Activated B cell treated with CpG ODN at 0.5 μM for 24 hours (primary cell): ENCODE measurements at regions of chr14 and their contacts with region 1.

Region 1: GRCh38 chr14:89178802-89179535 is 238.1 kb downstream of the FOXN3 start:
- DNase-seq: no peak
- ATAC-seq: no peak
- H3K4me3 Mint-ChIP-seq: no peak overlapping the region
- H3K27ac Mint-ChIP-seq: peak overlapping the region; percentile 31
- H3K4me1 Mint-ChIP-seq: peaks cover 19% of the 10 kb centered on the region
- H3K27me3 Mint-ChIP-seq: no peaks in the 10 kb centered on the region
- CTCF ChIP-seq: no peak

Region 2: GRCh38 chr14:88895116-88895515 is 283.9 kb before region 1 on chr14:
- CTCF ChIA-PET with region 1: no interaction called
- POLR2A ChIA-PET with region 1: no interaction called
- intact Hi-C with region 1: no loop called
- DNase-seq: no peak
- ATAC-seq: no peak
- H3K4me3 Mint-ChIP-seq: no peak overlapping the region
- H3K27ac Mint-ChIP-seq: no peak overlapping the region
- H3K4me1 Mint-ChIP-seq: no peaks in the 10 kb centered on the region
- H3K27me3 Mint-ChIP-seq: peaks cover 6% of the 10 kb centered on the region
- CTCF ChIP-seq: no peak

Region 3: DNA sequence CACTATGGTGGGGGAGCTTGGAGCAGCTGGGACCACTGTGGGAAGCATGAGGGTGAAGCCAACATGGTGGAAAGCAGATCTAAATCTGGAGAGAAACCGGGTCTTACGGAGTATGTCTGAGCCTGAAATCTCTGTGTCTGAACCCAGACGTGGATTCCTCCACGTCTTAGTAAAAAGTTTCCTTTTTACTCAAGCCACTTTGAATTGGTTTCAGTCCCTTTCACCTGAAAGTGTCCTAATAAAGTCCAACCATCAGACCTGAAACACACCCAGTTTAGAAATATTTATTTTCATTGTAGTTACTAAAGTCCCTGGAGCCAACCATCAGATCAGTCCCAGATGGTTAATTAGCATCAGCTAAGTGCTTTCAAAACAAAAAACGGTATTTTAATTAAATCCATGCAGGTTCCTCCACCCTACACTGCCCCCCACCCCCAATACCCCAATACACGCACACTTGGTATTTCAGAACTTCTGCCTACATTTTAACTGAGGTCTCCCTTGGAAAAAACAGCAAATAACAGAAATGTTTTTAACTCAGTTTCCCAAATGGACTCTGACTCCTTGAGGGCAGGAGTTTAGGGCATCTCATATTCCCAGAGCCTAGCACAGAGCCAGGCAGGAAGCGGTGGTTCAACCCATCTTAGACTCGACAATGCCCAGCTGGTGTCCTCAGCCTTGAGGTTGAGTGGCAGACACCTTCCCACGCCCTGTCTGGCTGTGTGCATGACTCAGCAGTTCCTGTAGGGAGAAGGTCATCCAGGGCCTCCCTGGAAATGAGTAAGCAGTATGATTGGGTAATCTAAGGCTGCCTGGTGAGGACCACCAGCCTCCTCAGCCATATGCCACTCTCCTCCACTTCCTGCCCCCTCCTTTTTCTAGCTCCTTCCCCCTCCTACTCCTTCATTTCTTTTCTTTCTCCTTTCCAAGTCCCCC is 178.7 kb before region 1 on chr14:
- CTCF ChIA-PET with region 1: no interaction called
- POLR2A ChIA-PET with region 1: no interaction called
- intact Hi-C with region 1: no loop called
- DNase-seq: no peak
- ATAC-seq: no peak
- H3K4me3 Mint-ChIP-seq: no peak overlapping the region
- H3K27ac Mint-ChIP-seq: no peak overlapping the region
- H3K4me1 Mint-ChIP-seq: no peaks in the 10 kb centered on the region
- H3K27me3 Mint-ChIP-seq: peaks cover 12% of the 10 kb centered on the region
- CTCF ChIP-seq: no peak

Region 4: DNA sequence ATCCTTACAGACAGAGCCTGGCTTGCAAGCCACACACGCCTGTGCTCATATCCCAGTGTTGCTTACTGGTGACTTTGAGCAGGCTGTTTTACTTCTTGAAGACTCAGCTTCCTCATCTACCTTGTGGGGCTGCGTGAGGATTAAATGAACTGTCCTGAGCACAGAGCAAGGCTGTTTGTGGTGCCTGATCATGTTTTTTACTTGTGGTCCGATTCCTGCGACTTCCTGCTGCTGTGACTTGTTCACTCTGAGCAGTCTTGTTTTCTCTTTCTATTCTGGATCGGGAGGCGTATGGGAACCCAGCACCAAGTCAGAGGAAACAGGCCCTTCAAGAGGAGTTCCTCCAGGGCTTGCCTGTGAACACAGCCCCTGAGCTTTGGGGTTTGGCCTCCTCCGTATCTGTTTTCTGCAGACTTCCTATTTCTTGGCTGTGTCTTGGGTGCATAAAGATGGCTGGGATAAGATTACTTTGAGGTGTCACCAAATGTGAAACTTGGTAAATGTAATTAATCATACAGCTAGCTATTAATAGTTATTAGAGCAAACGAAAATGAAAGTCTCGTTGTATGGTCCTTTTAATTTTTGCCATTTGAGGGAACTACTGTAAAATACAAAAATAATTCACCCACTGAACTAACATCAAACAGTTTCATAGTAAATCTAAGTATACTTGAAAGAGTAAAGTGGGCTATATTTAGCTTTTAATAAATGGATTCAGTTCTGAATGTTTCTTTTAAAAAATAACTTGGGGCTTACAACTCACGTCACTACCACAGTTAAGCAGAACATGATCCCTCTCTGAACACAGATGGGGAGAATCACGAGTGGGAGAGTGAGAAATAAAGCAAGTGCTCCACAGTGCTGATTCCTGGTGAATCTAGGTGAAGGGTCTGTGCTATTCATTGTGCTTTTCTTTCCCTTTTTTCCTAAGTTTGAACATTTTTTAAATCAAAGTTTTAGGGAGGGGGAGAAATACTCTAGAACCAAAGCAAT is 13.5 kb before region 1 on chr14:
- CTCF ChIA-PET with region 1: interaction called, 15 read pairs
- POLR2A ChIA-PET with region 1: interaction called, 5 read pairs
- intact Hi-C with region 1: no loop called
- DNase-seq: no peak
- ATAC-seq: peak; percentile 66
- H3K4me3 Mint-ChIP-seq: peak overlapping the region; percentile 83
- H3K27ac Mint-ChIP-seq: peak overlapping the region; percentile 90
- H3K4me1 Mint-ChIP-seq: peaks cover 36% of the 10 kb centered on the region
- H3K27me3 Mint-ChIP-seq: no peaks in the 10 kb centered on the region
- CTCF ChIP-seq: no peak

Region 5: DNA sequence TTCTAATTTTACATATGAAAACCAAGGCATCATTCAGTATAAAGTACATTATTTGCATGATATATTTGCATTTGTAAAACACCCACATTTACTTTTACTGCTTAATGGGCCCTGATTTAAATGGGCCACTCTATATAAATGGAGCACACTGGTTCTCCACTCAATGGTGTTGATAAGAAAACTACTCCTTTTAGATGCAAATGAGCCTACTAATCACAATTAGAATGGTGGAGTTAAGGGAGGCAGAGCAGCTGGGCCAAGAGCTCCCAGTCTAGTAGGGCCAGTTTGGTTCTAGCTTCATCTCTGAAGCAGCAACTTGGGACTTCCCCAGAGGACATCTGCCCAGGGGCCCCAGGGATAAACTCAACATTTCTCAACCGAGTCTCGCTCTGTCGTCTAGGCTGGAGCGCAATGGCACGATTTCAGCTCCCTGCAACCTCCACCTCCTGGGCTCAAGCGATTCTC is 117.3 kb after region 1 on chr14:
- CTCF ChIA-PET with region 1: no interaction called
- POLR2A ChIA-PET with region 1: no interaction called
- intact Hi-C with region 1: no loop called
- DNase-seq: no peak
- ATAC-seq: peak; percentile 58
- H3K4me3 Mint-ChIP-seq: no peak overlapping the region
- H3K27ac Mint-ChIP-seq: no peak overlapping the region
- H3K4me1 Mint-ChIP-seq: peaks cover 49% of the 10 kb centered on the region
- H3K27me3 Mint-ChIP-seq: no peaks in the 10 kb centered on the region
- CTCF ChIP-seq: no peak

Region 6: GRCh38 chr14:89336338-89336737 is 157.4 kb after region 1 on chr14:
- CTCF ChIA-PET with region 1: interaction called, 19 read pairs
- POLR2A ChIA-PET with region 1: no interaction called
- intact Hi-C with region 1: loop called (anchors 1 kb)
- DNase-seq: no peak
- ATAC-seq: peak; percentile 69
- H3K4me3 Mint-ChIP-seq: no peak overlapping the region
- H3K27ac Mint-ChIP-seq: peak overlapping the region; percentile 66
- H3K4me1 Mint-ChIP-seq: peaks cover 71% of the 10 kb centered on the region
- H3K27me3 Mint-ChIP-seq: no peaks in the 10 kb centered on the region
- CTCF ChIP-seq: no peak

Region 7: GRCh38 chr14:89509891-89510290 is 330.9 kb after region 1 on chr14:
- CTCF ChIA-PET with region 1: no interaction called
- POLR2A ChIA-PET with region 1: no interaction called
- intact Hi-C with region 1: loop called (anchors 5 kb)
- DNase-seq: no peak
- ATAC-seq: no peak
- H3K4me3 Mint-ChIP-seq: peak overlapping the region; percentile 81
- H3K27ac Mint-ChIP-seq: peak overlapping the region; percentile 93
- H3K4me1 Mint-ChIP-seq: peaks cover 42% of the 10 kb centered on the region
- H3K27me3 Mint-ChIP-seq: no peaks in the 10 kb centered on the region
- CTCF ChIP-seq: no peak

Region 8: DNA sequence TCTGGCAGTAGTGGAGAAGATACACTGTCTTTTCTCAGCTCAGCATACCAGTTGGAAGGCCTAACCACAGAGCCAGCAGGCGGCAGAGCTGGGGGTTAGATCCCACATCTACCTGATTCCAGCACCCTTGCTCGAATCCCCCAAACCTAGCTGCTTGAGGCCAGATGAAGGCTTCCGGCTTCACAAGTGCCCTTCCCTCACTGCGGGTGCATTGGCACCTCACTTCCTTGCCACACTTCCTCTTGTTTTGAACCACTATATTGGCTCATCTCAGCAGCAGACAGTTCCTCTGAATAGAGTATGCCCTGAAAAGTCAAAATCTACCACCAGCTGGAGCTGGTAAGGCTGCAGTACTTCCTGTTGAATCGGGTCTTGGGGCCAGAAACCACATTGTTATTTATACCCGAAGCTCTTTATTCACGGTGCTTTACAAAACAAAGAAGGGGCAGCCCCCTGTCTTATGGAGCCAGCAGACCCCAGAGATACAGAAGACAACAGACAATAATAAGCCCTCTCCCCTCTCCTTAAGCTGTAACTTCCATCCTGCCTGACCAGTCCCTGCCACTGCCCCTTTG is 541.9 kb after region 1 on chr14:
- CTCF ChIA-PET with region 1: no interaction called
- POLR2A ChIA-PET with region 1: no interaction called
- intact Hi-C with region 1: loop called (anchors 2 kb)
- DNase-seq: peak; percentile 45
- ATAC-seq: peak; percentile 90
- H3K4me3 Mint-ChIP-seq: peak overlapping the region; percentile 69
- H3K27ac Mint-ChIP-seq: peak overlapping the region; percentile 95
- H3K4me1 Mint-ChIP-seq: peaks cover 66% of the 10 kb centered on the region
- H3K27me3 Mint-ChIP-seq: no peaks in the 10 kb centered on the region
- CTCF ChIP-seq: no peak

Region 9: GRCh38 chr14:89899917-89900663 is 721.1 kb after region 1 on chr14:
- CTCF ChIA-PET with region 1: interaction called, 3 read pairs
- POLR2A ChIA-PET with region 1: no interaction called
- intact Hi-C with region 1: loop called (anchors 1 kb)
- DNase-seq: no peak
- ATAC-seq: peak; percentile 31
- H3K4me3 Mint-ChIP-seq: no peak overlapping the region
- H3K27ac Mint-ChIP-seq: no peak overlapping the region
- H3K4me1 Mint-ChIP-seq: peaks cover 3% of the 10 kb centered on the region
- H3K27me3 Mint-ChIP-seq: no peaks in the 10 kb centered on the region
- CTCF ChIP-seq: no peak

Region 10: DNA sequence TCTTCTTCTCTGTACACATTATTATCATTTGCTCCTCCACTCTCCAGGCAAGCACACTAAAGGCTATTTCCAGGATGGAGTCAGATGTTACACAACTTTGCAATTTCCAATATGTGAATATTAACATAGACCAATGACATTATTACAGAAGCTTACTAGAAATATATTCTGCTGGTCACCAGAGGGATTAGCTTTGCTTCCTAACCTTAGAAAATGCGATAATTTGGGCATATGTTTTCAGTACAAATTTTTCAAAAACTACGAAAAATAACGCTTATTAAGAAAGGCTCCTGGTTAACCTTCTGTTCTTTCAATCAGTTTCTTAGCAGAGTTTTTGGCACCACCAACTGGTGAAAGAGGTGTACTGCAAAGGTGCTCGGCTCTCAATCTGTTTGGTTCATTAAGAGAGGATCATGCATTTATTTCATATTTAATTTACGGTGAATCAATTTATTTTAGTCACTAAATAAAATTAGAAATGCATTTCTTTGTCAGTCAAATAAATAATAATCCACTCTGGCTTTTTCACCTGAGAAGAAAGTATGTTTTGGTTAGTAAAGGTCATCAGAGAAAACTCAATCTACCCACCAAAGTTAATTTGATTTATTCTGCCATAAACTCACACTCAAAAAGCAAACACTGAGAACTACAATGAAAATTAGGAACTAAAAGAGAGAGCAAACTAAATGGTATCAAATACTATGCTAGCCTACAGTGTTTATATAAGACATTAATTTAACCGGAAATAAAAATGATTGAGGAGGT is 736.3 kb after region 1 on chr14:
- CTCF ChIA-PET with region 1: interaction called, 3 read pairs
- POLR2A ChIA-PET with region 1: no interaction called
- intact Hi-C with region 1: loop called (anchors 1 kb)
- DNase-seq: peak; percentile 19
- ATAC-seq: peak; percentile 54
- H3K4me3 Mint-ChIP-seq: no peak overlapping the region
- H3K27ac Mint-ChIP-seq: no peak overlapping the region
- H3K4me1 Mint-ChIP-seq: peaks cover 3% of the 10 kb centered on the region
- H3K27me3 Mint-ChIP-seq: no peaks in the 10 kb centered on the region
- CTCF ChIP-seq: peak; percentile 94